ENCODE measurements at regions of chr12 and their contacts with region 1.

Region 1: DNA sequence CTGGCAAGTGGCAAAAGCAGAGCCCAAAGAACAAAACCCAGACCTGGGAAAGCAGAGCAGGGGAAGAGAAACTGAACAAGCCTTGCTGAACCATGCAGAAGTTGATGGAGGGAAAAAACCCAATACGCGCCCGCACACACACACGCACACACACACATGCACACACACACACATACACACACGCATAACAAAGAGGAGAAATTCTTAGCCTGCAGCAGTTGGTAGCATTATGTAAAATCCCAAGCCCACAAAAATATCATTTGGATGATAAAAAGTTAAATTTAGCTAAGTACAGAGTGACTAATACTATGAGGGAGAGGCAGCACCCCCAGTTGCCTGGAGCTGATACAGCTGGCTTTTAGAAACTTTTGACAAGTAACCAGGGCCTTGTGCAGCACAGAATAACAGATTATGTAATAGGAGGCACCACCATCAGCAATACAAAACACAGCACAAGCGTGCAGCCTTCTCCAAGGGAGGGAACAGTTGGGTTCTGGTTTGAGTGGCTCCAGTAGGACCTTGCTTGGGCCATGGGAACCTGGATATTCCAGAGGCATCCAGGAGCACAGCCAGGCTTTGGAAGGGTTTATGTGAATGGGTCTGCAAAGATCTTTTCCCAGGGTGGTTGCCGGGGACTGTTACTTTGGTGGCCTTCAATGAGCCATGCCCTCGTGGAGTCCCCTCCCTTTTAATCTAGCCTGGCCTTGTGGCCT is 35.3 kb downstream of the PITPNM2 start:
- DNase-seq: peak in 8 of 10 donors; percentile 48 to 79 (median 60)
- H3K4me3 ChIP-seq: peak overlapping the region in 2 of 59 donors; percentile 0 to 21
- H3K27ac ChIP-seq: peak overlapping the region in 58 of 59 donors; percentile 58 to 96 (median 88)
- H3K27me3 ChIP-seq: no peaks in the 10 kb centered on the region
- CTCF ChIP-seq: peak in 1 of 56 donors; percentile 11

Region 2: DNA sequence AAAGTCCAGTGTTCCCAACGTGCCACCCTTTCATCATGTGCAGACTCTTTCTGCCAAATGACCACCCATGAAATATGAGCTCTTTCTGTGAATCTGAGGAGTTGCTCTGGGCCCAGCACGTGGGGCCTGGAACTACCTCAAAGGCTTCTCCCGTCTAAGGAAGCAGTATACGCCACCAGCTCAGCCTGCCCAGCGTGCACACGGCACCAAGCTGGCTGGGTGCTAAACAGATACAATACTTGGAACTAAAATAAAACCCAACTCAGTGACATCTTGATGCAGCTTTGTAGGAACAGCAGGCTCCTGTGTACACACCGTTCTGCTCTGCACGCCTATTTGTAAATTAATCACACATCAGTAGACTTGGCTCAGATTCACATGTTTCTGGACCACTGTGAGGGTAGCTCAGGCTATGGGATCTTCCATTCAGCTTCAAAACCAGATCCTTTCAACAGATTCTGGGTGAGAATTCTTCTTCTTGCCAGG is 60.2 kb before region 1 on chr12:
- intact Hi-C with region 1: loop called in 1 of 2 experiments (anchors 1 kb)
- DNase-seq: peak in 5 of 10 donors; percentile 44 to 73 (median 61)
- H3K4me3 ChIP-seq: no peak overlapping the region
- H3K27ac ChIP-seq: peak overlapping the region in 40 of 59 donors; percentile 3 to 88 (median 60)
- H3K27me3 ChIP-seq: no peaks in the 10 kb centered on the region
- CTCF ChIP-seq: no peak

Region 3: DNA sequence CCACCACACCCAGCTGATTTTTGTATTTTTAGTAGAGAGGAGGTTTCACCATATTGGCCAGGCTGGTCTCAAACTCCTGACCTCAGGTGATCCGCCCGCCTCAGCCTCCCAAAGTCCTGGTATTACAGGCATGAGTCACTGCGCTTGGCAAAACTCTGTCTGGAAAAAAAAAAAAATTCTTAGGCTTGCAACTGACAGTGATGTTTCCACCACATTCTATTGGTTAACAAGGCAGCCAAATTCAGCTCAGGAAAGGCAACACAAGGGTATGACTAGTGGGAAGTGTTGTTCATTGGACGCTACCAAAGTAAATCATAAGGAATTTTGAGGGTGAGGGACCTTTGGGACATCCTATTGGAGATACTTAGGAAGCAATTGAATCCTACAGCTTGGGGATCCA is 251.9 kb after region 1 on chr12:
- intact Hi-C with region 1: no loop called
- DNase-seq: no peak
- H3K4me3 ChIP-seq: no peak overlapping the region
- H3K27ac ChIP-seq: no peak overlapping the region
- H3K27me3 ChIP-seq: no peaks in the 10 kb centered on the region
- CTCF ChIP-seq: no peak

Measured in dorsolateral prefrontal cortex (tissue), 120 donors.